ENCODE measurements at regions of chr2 and their contacts with region 1.

Region 1: GRCh38 chr2:218269899-218270720 is at the starts of genes AAMP and PNKD:
- DNase-seq: peak; percentile 100
- ATAC-seq: peak; percentile 89 to 98 (median 89)
- H3K4me3 ChIP-seq: peak within 1 kb of the TSS; percentile 82
- H3K4me3 Mint-ChIP-seq: peak within 1 kb of the TSS; percentile 96
- H3K27ac ChIP-seq: peak within 1 kb of the TSS; percentile 73
- H3K27ac Mint-ChIP-seq: peak within 1 kb of the TSS; percentile 84 to 88
- H3K4me1 ChIP-seq: peaks cover 34% of the 10 kb centered on the region
- H3K4me1 Mint-ChIP-seq: peaks cover 31 to 56% of the 10 kb centered on the region in 2 donors
- H3K27me3 ChIP-seq: no peaks in the 10 kb centered on the region
- H3K27me3 Mint-ChIP-seq: no peaks in the 10 kb centered on the region
- CTCF ChIP-seq: no peak
- total RNA-seq, gene AAMP: 52.5 to 61.6 (median 60.0) TPM
- total RNA-seq, gene PNKD: 18.8 to 21.3 (median 18.9) TPM

Region 2: GRCh38 chr2:218286570-218287459 is 16.7 kb after region 1 on chr2:
- intact Hi-C with region 1: loop called (anchors 1 kb)
- DNase-seq: peak; percentile 77 to 96
- ATAC-seq: peak; percentile 66 to 87 (median 75)
- H3K4me3 ChIP-seq: peak overlapping the region; percentile 40
- H3K4me3 Mint-ChIP-seq: peak overlapping the region; percentile 92
- H3K27ac ChIP-seq: peak overlapping the region; percentile 99
- H3K27ac Mint-ChIP-seq: peak overlapping the region; percentile 100
- H3K4me1 ChIP-seq: peaks cover 92% of the 10 kb centered on the region
- H3K4me1 Mint-ChIP-seq: peaks cover 70 to 94% of the 10 kb centered on the region in 2 donors
- H3K27me3 ChIP-seq: no peaks in the 10 kb centered on the region
- H3K27me3 Mint-ChIP-seq: no peaks in the 10 kb centered on the region
- CTCF ChIP-seq: no peak

Region 3: DNA sequence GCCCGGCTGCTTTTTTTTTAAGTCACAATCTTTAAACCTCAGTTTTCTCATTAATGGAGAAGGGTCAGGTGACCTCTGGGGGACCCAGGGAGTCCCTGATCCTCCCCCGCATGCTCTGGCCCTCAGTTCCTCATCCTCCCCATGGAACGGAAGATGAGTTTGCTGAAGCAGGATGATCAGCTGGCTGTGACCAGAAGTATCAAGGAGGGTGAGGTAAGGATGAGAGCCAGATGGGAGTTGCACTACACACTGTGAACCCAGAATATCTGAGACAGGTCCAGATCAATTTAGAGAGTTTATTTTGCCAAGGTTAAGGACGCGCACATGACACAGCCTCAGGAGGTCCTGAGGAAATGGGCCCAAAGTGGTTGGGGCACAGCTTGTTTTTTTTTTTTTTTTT is 90.3 kb after region 1 on chr2:
- intact Hi-C with region 1: loop called (anchors 1 kb)
- DNase-seq: no peak
- ATAC-seq: no peak
- H3K4me3 ChIP-seq: no peak overlapping the region
- H3K4me3 Mint-ChIP-seq: no peak overlapping the region
- H3K27ac ChIP-seq: no peak overlapping the region
- H3K27ac Mint-ChIP-seq: no peak overlapping the region
- H3K4me1 ChIP-seq: peaks cover 12% of the 10 kb centered on the region
- H3K4me1 Mint-ChIP-seq: no peaks in the 10 kb centered on the region
- H3K27me3 ChIP-seq: no peaks in the 10 kb centered on the region
- H3K27me3 Mint-ChIP-seq: no peaks in the 10 kb centered on the region
- CTCF ChIP-seq: no peak

Region 4: DNA sequence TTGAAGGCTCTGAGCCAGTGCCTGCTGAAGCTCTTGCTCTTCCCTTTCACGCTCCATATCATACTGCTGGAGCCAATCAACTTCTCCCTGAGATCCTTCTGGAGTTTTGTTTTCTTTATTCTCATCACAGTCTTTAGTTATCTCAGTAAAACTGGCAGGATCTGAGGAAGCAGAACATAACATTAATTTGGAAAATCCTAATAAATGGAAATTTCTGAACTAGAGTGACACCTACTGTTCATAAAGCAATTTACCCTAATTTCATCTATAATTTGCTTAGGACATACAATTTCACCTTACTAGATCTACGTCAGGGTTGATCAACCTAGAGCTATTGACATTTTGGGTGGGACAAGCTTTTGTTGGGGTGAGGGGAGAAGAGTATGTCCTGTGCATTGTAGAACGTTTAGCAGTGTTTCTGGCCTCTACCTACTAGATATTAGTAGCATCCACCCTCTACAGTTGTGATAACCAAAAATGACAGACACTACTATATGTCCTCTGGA is 196.0 kb after region 1 on chr2:
- intact Hi-C with region 1: loop called (anchors 1 kb)
- DNase-seq: peak in 1 of 2 donors; percentile 48
- ATAC-seq: peak in 2 of 3 donors; percentile 45 to 47
- H3K4me3 ChIP-seq: no peak overlapping the region
- H3K4me3 Mint-ChIP-seq: no peak overlapping the region
- H3K27ac ChIP-seq: no peak overlapping the region
- H3K27ac Mint-ChIP-seq: peak overlapping the region in 1 of 2 donors; percentile 36
- H3K4me1 ChIP-seq: no peaks in the 10 kb centered on the region
- H3K4me1 Mint-ChIP-seq: peaks cover 18% of the 10 kb centered on the region in 2 donors
- H3K27me3 ChIP-seq: no peaks in the 10 kb centered on the region
- H3K27me3 Mint-ChIP-seq: no peaks in the 10 kb centered on the region
- CTCF ChIP-seq: peak; percentile 65

Region 5: DNA sequence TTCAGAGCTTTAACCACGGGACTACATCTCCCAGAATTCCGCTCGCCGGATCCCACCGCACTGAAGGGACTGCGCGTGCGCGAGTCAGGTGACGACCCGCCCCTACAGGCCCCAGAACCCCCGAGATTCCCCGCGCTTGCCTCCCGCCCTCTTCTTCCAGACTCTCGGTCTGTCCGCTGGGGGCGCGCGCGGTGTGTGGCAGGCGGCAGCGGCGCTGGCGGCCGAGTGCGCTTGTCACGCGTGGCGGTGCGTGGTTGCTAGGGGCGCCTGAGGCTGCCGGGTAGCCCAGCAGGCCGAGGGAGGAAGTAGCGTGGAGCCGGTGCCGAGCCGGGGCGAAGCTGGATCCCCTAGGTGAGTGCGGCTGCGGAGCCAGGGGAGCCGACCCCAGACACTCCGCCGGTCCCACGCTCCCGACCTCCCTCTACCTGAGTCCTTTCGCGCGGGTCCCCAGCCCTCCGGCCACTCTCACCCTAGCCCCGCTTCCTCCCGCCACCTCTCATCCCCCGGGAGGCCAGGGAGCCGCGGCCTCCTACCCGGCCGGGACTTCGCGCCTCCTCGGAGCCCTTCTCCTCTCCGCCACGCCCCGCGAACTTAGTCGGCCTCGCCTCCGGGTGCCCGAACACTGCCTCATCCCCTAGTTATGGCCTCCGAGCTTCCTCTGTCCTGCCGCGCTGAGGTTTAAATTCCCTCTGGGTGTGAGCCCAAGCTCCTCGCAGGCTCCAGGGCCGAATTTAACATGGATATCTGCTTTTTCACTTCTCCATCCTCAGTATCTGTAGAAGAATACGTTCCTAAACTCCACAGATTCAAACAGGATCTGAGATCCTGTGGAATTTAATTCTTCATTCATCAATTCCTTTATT is 440.8 kb after region 1 on chr2 and contains the start of gene TTLL4:
- intact Hi-C with region 1: loop called (anchors 1 kb)
- DNase-seq: peak; percentile 98 to 99
- ATAC-seq: peak; percentile 98 to 100 (median 98)
- H3K4me3 ChIP-seq: peak within 1 kb of the TSS; percentile 76
- H3K4me3 Mint-ChIP-seq: peak within 1 kb of the TSS; percentile 99
- H3K27ac ChIP-seq: peak within 1 kb of the TSS; percentile 78
- H3K27ac Mint-ChIP-seq: peak within 1 kb of the TSS; percentile 94 to 97
- H3K4me1 ChIP-seq: peaks cover 10% of the 10 kb centered on the region
- H3K4me1 Mint-ChIP-seq: peaks cover 12 to 27% of the 10 kb centered on the region in 2 donors
- H3K27me3 ChIP-seq: no peaks in the 10 kb centered on the region
- H3K27me3 Mint-ChIP-seq: no peaks in the 10 kb centered on the region
- CTCF ChIP-seq: peak; percentile 89
- total RNA-seq, gene TTLL4: 20.2 to 25.5 (median 22.8) TPM

Measured in natural killer cell (primary cell).